ENCODE measurements at regions of chr3 and their contacts with region 1.

Region 1: DNA sequence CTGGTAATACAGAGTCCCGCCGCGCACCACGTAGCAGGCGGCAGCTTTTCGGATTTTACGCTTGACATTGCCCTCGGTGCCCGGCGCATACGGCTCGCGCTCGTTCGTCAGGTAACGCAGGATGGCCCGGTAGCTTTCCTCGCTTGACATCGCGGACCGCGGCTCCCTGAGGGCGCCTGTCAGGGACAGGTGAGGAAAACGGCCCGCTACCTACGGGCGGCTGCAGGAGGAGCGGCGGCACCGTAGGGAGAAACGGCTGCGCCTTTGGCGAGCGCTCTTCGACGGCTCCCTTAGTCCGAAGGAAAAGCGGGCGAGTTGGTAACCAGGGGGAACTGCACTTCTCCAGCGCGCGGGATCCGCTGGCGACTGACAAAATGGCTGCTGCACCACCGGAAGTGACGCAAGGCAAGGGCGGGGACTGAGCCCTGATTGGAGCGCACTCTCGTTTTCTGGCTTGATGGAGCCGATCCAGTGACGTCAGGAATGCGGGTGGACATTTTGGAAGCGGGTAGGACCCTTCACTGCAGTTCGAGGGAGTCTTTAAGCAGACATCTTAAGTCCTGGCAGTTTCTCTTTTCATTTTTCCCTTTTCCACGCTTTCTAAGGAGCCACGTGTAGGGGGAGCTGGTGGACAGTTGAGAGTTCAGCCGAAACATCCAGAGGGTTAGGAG is at the start of gene ZBTB11:
- DNase-seq: peak; percentile 98 to 100 (median 99)
- ATAC-seq: peak; percentile 80
- H3K4me3 ChIP-seq: peak within 1 kb of the TSS; percentile 91
- H3K4me3 Mint-ChIP-seq: peak within 1 kb of the TSS; percentile 87 to 97 (median 93)
- H3K27ac ChIP-seq: peak within 1 kb of the TSS; percentile 98
- H3K27ac Mint-ChIP-seq: peak within 1 kb of the TSS; percentile 93 to 100 (median 97)
- H3K4me1 ChIP-seq: peaks cover 23 to 26% of the 10 kb centered on the region in 2 donors
- H3K4me1 Mint-ChIP-seq: peaks cover 19 to 63% (median 54%) of the 10 kb centered on the region in 7 donors
- H3K27me3 ChIP-seq: no peaks in the 10 kb centered on the region
- H3K27me3 Mint-ChIP-seq: no peaks in the 10 kb centered on the region
- total RNA-seq, gene ZBTB11: 31.9 to 68.2 (median 54.2) TPM

Region 2: DNA sequence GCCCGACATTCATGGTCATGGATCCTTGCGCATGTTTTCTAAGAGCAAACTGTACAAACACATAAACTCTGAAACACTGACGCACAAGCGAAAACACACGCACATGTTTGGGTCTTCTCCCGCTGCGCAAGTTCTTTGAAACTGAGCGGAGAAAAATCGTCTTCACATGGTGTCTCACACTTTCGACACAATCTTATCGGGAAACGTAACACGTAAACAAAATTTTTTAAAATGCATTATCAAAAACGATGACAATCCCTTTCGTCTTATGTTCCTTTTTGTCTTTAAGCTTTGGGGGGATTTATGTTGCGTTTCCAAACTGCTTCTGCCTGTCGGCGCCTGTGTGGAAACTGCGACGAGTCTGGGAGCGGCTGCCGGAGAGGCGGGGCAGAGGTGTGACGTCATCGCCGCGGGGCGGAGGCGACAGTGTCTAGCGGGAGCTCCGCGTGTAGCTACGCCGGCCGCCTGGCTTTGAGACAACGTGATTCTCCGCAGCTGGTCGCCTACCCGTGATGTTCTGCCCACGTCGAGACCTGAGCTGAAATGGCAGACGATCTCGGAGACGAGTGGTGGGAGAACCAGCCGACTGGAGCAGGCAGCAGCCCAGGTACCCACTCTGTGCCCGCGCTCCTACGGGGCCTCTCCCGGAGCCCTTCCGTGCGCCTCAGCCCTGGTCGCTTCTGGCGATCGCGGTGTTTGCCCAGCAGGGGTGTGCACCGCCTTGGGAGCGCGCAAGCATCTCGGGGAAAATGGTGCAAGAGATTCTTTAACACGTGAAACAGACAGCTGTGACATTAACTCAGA is 1859.3 kb before region 1 on chr3 and contains the start of gene CMSS1:
- CTCF ChIA-PET with region 1: no interaction called
- POLR2A ChIA-PET with region 1: no interaction called
- intact Hi-C with region 1: loop called in 1 of 2 experiments (anchors 5 kb)
- DNase-seq: peak; percentile 96 to 98 (median 97)
- ATAC-seq: peak; percentile 94
- H3K4me3 ChIP-seq: peak within 1 kb of the TSS; percentile 80
- H3K4me3 Mint-ChIP-seq: peak within 1 kb of the TSS; percentile 84 to 99 (median 95)
- H3K27ac ChIP-seq: peak within 1 kb of the TSS; percentile 90
- H3K27ac Mint-ChIP-seq: peak within 1 kb of the TSS; percentile 93 to 100 (median 100)
- H3K4me1 ChIP-seq: peaks cover 18 to 22% of the 10 kb centered on the region in 2 donors
- H3K4me1 Mint-ChIP-seq: peaks cover 19 to 62% (median 41%) of the 10 kb centered on the region in 7 donors
- H3K27me3 ChIP-seq: no peaks in the 10 kb centered on the region
- H3K27me3 Mint-ChIP-seq: no peaks in the 10 kb centered on the region
- total RNA-seq, gene CMSS1: 14.9 to 47.7 (median 18.2) TPM

Region 3: DNA sequence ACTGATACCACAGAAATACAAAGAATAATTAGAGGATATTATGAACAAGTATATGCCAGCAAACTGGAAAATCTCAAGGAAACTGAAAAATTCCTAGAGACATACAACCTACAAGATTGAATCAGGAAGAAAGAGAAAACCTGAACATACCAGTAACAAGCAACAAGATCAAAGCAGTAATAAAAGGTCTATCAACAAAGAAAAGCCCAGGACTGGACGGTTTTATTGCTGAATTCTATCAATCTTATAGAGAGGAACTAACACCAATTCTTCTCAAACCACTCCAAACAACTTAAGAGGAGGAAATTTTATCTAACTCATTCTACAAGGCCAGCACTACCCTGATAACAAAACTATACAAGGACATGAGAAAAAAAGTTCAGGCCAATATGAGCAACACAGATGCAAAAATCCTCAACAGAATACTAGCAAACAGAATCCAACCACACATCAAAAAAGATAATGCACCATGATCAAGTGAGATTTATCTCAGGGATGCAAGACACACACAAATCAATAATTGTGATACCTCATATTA is 285.4 kb before region 1 on chr3:
- CTCF ChIA-PET with region 1: no interaction called
- POLR2A ChIA-PET with region 1: no interaction called
- intact Hi-C with region 1: loop called in 1 of 2 experiments (anchors 10 kb)
- DNase-seq: no peak
- ATAC-seq: no peak
- H3K4me3 ChIP-seq: no peak overlapping the region
- H3K4me3 Mint-ChIP-seq: peak overlapping the region in 1 of 10 donors; percentile 12
- H3K27ac ChIP-seq: no peak overlapping the region
- H3K27ac Mint-ChIP-seq: peak overlapping the region in 7 of 9 donors; percentile 5 to 71 (median 43)
- H3K4me1 ChIP-seq: peaks cover 0 to 12% of the 10 kb centered on the region in 2 donors
- H3K4me1 Mint-ChIP-seq: peaks cover 20 to 58% (median 49%) of the 10 kb centered on the region in 7 donors
- H3K27me3 ChIP-seq: no peaks in the 10 kb centered on the region
- H3K27me3 Mint-ChIP-seq: no peaks in the 10 kb centered on the region

Region 4: GRCh38 chr3:101518421-101518871 is 158.5 kb before region 1 on chr3:
- CTCF ChIA-PET with region 1: interaction called, 3 read pairs
- POLR2A ChIA-PET with region 1: interaction called, 7 read pairs
- intact Hi-C with region 1: loop called (anchors 1 to 2 kb)
- DNase-seq: peak in 8 of 9 donors; percentile 40 to 82 (median 76)
- ATAC-seq: peak; percentile 91
- H3K4me3 ChIP-seq: peak overlapping the region; percentile 17
- H3K4me3 Mint-ChIP-seq: peak overlapping the region; percentile 35 to 82 (median 62)
- H3K27ac ChIP-seq: peak overlapping the region; percentile 77
- H3K27ac Mint-ChIP-seq: peak overlapping the region; percentile 87 to 98 (median 96)
- H3K4me1 ChIP-seq: peaks cover 54 to 62% of the 10 kb centered on the region in 2 donors
- H3K4me1 Mint-ChIP-seq: peaks cover 20 to 80% (median 71%) of the 10 kb centered on the region in 7 donors
- H3K27me3 ChIP-seq: no peaks in the 10 kb centered on the region
- H3K27me3 Mint-ChIP-seq: no peaks in the 10 kb centered on the region

Region 5: DNA sequence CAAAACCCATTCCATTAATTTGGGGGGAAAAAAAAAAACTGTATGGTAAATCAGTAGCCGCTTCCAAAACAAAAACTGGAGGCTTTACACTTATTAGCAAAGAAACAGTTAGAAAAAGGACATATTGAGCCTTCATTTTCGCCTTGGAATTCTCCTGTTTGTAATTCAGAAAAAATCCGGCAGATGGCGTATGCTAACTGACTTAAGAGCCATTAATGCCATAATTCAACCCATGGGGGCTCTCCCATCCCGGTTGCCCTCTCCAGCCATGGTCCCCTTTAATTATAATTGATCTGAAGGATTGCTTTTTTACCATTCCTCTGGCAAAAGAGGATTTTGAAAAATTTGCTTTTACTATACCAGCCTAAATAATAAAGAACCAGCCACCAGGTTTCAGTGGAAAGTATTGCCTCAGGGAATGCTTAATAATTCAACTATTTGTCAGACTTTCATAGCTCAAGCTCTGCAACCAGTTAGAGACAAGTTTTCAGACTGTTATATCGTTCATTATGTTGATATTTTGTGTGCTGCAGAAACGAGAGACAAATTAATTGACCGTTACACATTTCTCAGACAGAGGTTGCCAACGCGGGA is 19.0 kb after region 1 on chr3:
- CTCF ChIA-PET with region 1: interaction called, 3 read pairs
- POLR2A ChIA-PET with region 1: interaction called, 4 read pairs
- intact Hi-C with region 1: loop called in 1 of 2 experiments (anchors 2 kb)
- DNase-seq: peak in 7 of 9 donors; percentile 30 to 65 (median 57)
- ATAC-seq: no peak
- H3K4me3 ChIP-seq: no peak overlapping the region
- H3K4me3 Mint-ChIP-seq: no peak overlapping the region
- H3K27ac ChIP-seq: no peak overlapping the region
- H3K27ac Mint-ChIP-seq: peak overlapping the region in 2 of 9 donors; percentile 8 to 45
- H3K4me1 ChIP-seq: no peaks in the 10 kb centered on the region
- H3K4me1 Mint-ChIP-seq: peaks cover 0 to 4% (median 3%) of the 10 kb centered on the region in 7 donors
- H3K27me3 ChIP-seq: no peaks in the 10 kb centered on the region
- H3K27me3 Mint-ChIP-seq: no peaks in the 10 kb centered on the region

Region 6: GRCh38 chr3:101936419-101937356 is 259.8 kb after region 1 on chr3:
- CTCF ChIA-PET with region 1: no interaction called
- POLR2A ChIA-PET with region 1: no interaction called
- intact Hi-C with region 1: loop called in 1 of 2 experiments (anchors 5 kb)
- DNase-seq: peak in 8 of 9 donors; percentile 34 to 68 (median 58)
- ATAC-seq: peak; percentile 90
- H3K4me3 ChIP-seq: peak overlapping the region; percentile 9
- H3K4me3 Mint-ChIP-seq: peak overlapping the region in 9 of 10 donors; percentile 44 to 77 (median 72)
- H3K27ac ChIP-seq: no peak overlapping the region
- H3K27ac Mint-ChIP-seq: peak overlapping the region; percentile 76 to 91 (median 87)
- H3K4me1 ChIP-seq: peaks cover 28 to 56% of the 10 kb centered on the region in 2 donors
- H3K4me1 Mint-ChIP-seq: peaks cover 15 to 43% (median 30%) of the 10 kb centered on the region in 7 donors
- H3K27me3 ChIP-seq: no peaks in the 10 kb centered on the region
- H3K27me3 Mint-ChIP-seq: peaks cover 0 to 27% (median 0%) of the 10 kb centered on the region in 5 donors